Mammary epithelial cell (primary cell): ENCODE measurements at regions of chr22 and their contacts with region 1.

Region 1: DNA sequence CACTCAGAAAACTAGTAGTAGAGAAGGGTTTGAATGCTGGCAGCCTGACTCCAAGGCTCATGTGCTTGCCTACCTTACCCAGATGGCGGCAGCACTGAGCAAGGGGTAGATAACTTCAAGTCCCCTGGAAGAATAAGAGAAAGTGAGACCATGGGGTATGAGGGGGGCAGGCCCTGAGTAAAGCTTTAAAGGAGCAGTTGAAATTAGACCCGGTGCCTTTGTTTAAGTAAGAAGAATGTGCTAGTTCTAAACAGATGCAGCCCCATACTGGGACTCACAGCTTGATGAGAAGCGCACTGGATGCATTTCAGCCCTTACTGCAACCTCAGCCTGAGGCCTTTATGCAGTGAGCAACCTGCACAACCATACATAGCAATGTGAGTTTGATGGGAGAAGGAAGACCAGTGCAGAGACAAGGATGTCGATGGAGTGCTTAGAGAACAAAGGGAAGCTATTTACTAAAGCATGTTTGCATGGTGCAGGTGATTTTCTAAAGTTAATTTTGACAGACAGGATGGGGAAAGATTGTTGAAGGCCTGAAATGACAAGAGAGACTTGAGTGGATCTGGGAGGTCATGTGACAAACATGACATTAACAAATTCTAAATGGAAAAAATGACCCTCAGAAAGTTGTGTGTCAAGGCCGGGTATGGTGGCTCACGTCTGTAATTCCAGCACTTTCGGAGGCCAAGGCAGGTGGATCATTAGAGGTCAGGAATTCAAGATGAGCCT is 27.1 kb upstream of the TMA7B start:
- DNase-seq: no peak
- H3K4me3 ChIP-seq: no peak overlapping the region
- H3K27ac ChIP-seq: no peak overlapping the region
- H3K4me1 ChIP-seq: peaks cover 14% of the 10 kb centered on the region
- H3K27me3 ChIP-seq: no peaks in the 10 kb centered on the region
- CTCF ChIP-seq: peak; percentile 66 to 75

Region 2: DNA sequence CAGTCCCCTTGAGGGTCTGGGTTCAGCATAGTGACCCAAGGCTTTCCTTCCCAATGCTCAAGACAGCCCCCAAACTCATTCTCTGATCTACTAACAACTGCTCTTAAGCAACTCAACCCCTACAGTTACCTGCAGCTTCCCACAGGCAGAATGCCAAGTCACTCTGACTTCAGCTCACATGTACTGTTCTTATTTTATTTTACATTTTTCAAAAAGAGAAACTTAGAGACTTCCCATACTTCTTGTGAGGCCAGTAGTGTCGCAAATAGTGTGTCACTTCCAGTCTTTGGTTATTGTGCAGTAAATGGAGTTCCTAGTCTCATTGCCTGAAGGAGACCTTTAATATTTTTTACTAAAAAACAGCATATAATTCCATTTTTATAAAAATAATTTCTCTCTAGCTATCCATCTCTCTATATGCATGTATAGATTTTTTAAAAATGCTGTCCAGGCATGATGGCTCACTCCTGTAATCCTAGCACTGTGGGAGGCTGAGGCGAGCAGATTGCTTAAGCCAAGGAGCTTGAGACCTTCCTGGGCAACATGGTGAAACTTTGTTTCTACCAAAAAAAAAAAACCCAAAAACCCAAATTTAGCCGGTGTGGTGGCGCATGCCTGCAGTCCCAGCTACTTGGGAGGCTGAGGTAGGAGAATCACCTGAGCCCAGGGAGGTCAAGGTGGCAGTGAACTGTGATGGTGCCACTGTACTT is 81.3 kb before region 1 on chr22:
- CTCF ChIA-PET with region 1: no interaction called
- dilution Hi-C with region 1: loop called (anchors 5 kb)
- in situ Hi-C with region 1: no loop called
- intact Hi-C with region 1: no loop called
- DNase-seq: no peak
- H3K4me3 ChIP-seq: no peak overlapping the region
- H3K27ac ChIP-seq: no peak overlapping the region
- H3K4me1 ChIP-seq: no peaks in the 10 kb centered on the region
- H3K27me3 ChIP-seq: no peaks in the 10 kb centered on the region
- CTCF ChIP-seq: no peak